ENCODE measurements at regions of chr19 and their contacts with region 1.

Region 1: GRCh38 chr19:18251587-18252369 is 22.5 kb downstream of the IQCN start:
- DNase-seq: peak; percentile 85
- ATAC-seq: peak; percentile 87
- H3K4me3 Mint-ChIP-seq: no peak overlapping the region
- H3K27ac Mint-ChIP-seq: no peak overlapping the region
- H3K4me1 Mint-ChIP-seq: peaks cover 3% of the 10 kb centered on the region
- H3K27me3 Mint-ChIP-seq: peaks cover 19% of the 10 kb centered on the region

Region 2: DNA sequence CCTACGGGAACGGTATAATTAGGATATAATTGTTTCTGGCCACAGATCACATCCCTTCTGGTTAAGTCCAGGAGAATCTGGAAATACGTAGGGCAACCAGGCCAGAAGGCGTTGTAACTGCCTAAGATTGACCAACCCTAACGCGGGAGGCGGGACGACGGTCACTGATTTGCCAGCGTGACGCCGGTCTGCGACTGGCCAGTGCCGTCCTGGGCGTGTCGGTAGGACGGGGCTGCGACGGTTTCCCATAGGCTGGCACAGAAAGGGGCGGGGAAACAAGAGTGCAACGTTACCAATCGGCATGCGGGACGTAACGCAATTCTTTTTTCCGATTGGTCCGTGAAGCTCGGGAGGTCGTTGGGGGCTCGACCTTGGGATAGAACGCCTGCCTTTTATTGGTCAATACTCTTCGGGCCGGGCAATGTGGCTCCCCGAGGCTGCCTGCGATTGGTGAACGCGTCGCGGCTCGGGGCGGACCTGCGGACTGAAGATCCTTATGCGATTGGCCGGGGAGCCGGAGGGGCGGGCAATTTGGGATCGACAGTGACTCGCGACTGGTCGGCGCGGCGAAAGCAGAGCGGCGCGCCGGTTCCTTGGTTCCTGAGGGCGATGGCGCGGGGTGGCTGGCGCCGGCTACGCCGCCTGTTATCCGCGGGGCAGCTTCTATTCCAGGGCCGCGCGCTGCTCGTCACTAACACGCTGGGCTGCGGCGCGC is 58.9 kb before region 1 on chr19 and contains the start of gene MPV17L2:
- CTCF ChIA-PET with region 1: interaction called, 41 read pairs
- DNase-seq: peak; percentile 100
- ATAC-seq: peak; percentile 94
- H3K4me3 Mint-ChIP-seq: peak within 1 kb of the TSS; percentile 82
- H3K27ac Mint-ChIP-seq: peak within 1 kb of the TSS; percentile 93
- H3K4me1 Mint-ChIP-seq: peaks cover 28% of the 10 kb centered on the region
- H3K27me3 Mint-ChIP-seq: peaks cover 3% of the 10 kb centered on the region
- total RNA-seq, gene MPV17L2: 8.2 to 12.9 TPM

Region 3: GRCh38 chr19:18224525-18225354 is 27.0 kb before region 1 on chr19:
- CTCF ChIA-PET with region 1: interaction called, 11 read pairs
- DNase-seq: peak; percentile 96
- ATAC-seq: peak; percentile 99
- H3K4me3 Mint-ChIP-seq: peak overlapping the region; percentile 76
- H3K27ac Mint-ChIP-seq: peak overlapping the region; percentile 70
- H3K4me1 Mint-ChIP-seq: peaks cover 18% of the 10 kb centered on the region
- H3K27me3 Mint-ChIP-seq: peaks cover 71% of the 10 kb centered on the region

Region 4: DNA sequence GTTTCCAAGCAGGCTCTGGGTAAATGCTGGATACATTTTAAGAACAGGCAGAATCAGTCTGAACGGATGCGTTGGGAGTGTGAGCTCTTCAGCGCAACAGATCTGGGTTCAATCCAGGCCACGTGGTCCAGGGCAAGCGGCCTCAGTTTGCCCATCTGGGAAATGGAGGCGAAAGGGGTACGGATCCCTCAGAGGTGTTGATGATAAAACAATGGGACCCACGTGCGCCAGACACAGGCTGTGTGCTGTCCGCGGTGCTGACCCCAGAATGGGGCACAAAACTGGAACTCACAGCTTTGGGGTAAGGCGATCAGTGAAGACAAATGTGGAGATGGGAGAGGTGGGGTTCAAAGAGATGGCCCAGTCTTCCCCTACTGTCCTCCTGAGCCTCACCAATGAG is 12.5 kb before region 1 on chr19:
- CTCF ChIA-PET with region 1: interaction called, 19 read pairs
- DNase-seq: no peak
- ATAC-seq: no peak
- H3K4me3 Mint-ChIP-seq: no peak overlapping the region
- H3K27ac Mint-ChIP-seq: no peak overlapping the region
- H3K4me1 Mint-ChIP-seq: no peaks in the 10 kb centered on the region
- H3K27me3 Mint-ChIP-seq: peaks cover 29% of the 10 kb centered on the region

Region 5: DNA sequence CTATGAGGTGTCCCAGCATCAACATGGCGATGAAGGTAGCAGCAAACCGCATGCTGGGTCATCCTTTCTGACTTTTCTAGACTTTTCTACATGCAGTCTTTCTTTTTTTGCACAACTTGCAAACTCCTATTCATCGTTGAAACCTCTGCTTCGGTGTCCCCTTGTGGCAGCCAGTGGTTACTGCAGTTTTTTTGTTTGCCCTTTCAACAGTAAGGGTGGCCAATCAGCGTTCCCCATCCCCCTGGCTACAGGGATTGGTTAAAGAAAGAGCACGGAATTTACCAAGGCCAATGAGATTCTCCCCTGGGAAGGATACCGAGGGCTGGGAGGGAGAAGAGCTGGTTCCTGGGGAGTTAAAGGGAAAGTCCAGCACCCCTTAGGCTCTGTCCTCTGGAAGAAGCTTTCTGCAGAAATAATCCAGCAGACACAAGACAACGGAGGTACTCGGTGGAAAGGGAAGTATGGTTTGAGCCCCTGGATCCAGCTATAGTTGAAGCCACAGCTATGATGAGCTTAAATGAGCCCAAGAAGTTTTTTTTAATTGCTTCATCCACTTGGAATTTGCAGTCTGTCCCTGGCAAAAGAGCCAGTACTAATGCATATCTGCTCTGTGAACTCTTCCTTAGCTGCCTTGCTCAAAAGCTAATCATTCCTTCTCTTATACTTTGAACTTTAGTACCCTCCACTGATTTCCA is 76.7 kb after region 1 on chr19:
- CTCF ChIA-PET with region 1: interaction called, 25 read pairs
- DNase-seq: peak; percentile 95
- ATAC-seq: peak; percentile 100
- H3K4me3 Mint-ChIP-seq: peak overlapping the region; percentile 66
- H3K27ac Mint-ChIP-seq: peak overlapping the region; percentile 29
- H3K4me1 Mint-ChIP-seq: peaks cover 23% of the 10 kb centered on the region
- H3K27me3 Mint-ChIP-seq: no peaks in the 10 kb centered on the region